Left ventricle myocardium superior (tissue), 1 donor: ENCODE measurements at regions of chr12 and their contacts with region 1.

Region 1: DNA sequence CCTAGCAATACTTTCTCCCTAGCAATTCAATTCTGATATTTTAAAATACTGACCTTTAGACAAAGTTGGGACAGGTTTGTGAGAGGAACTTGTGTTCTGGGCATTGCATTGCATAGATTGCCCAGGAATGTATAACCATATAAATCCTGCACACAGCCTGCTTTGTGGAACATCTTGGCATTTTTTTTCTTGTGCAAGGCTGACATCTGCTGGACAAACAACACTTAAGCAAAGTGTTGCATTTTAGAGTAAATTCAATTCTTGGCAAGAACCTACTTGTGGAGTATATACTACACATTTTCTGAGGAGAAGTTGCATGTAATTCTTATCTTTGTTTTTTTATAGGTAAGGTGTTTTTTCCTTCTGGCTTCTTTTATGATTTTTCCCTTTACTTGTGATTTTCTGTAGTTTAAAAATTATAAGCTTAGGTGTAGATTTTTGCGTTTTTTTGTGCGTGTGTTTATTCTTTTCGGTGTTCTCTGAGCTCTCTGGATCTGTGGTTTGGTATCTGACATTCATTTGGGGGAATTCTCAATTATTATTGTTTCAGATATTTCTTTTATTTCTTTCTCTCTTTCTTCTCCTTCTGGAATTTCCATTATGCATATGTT is 26.4 kb downstream of the TESPA1 start:
- DNase-seq: no peak
- ATAC-seq: peak; percentile 52

Region 2: DNA sequence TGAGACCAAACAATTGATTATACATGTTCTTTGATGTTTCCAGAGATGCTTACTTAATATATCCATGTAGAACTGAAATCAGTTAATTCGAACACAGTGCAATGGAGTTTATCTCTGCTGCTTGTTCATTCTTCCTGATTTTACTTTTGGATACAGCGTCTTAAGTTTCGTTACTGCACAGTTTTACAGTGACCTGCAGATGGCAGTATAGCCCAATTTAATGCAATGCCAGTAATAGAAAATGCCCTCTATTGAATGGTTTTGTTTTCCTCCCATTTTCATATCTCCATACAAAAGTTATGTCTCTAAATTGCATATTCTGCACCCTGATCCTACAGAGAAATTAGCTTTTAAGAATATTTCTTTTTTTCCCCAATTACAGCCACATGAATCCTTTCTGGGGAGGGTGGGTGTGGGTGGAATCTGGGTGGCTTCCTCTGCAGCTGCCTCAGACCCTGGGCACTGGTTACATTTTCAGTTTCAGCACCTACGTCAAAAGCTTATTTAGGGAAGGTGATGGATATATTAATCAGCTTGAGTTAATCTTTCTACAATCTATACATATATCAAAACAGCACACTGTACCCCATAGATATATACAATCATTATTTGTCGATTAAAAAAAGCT is 208.8 kb before region 1 on chr12:
- intact Hi-C with region 1: loop called (anchors 5 kb)
- DNase-seq: no peak
- ATAC-seq: peak; percentile 31

Region 3: DNA sequence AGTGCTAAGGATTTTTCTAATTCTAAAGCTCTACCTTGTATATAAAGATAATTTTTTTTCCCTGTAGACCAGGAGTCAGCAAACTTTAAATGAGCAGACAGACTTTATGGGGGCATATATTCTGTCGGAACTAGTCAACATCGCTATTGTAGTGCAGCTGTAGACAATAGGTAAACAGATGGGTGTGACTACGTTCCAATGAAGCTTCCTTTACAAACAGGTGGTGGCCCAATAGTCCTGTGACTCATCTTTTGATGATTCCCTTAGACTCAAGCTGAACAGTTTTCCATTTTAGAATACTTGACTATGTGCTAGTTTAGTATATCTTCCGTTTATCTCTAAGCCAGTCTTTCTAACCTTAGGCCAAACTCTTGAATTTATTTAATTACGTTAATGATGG is 87.5 kb before region 1 on chr12:
- intact Hi-C with region 1: no loop called
- DNase-seq: no peak
- ATAC-seq: no peak

Region 4: GRCh38 chr12:54917001-54917488 is 41.1 kb before region 1 on chr12:
- intact Hi-C with region 1: no loop called
- DNase-seq: no peak
- ATAC-seq: no peak